Sigmoid colon (tissue), 7 donors: ENCODE measurements at regions of chr11 and their contacts with region 1.

Region 1: GRCh38 chr11:12159351-12160099 is 49.1 kb downstream of the MICAL2 start:
- DNase-seq: peak; percentile 86
- H3K4me3 ChIP-seq: no peak overlapping the region
- H3K27ac ChIP-seq: peak overlapping the region; percentile 83 to 96 (median 94)
- H3K4me1 ChIP-seq: peaks cover 3 to 90% (median 87%) of the 10 kb centered on the region in 4 donors
- H3K27me3 ChIP-seq: no peaks in the 10 kb centered on the region
- CTCF ChIP-seq: no peak
- EP300 ChIP-seq: no peak
- POLR2A ChIP-seq: no peak

Region 2: DNA sequence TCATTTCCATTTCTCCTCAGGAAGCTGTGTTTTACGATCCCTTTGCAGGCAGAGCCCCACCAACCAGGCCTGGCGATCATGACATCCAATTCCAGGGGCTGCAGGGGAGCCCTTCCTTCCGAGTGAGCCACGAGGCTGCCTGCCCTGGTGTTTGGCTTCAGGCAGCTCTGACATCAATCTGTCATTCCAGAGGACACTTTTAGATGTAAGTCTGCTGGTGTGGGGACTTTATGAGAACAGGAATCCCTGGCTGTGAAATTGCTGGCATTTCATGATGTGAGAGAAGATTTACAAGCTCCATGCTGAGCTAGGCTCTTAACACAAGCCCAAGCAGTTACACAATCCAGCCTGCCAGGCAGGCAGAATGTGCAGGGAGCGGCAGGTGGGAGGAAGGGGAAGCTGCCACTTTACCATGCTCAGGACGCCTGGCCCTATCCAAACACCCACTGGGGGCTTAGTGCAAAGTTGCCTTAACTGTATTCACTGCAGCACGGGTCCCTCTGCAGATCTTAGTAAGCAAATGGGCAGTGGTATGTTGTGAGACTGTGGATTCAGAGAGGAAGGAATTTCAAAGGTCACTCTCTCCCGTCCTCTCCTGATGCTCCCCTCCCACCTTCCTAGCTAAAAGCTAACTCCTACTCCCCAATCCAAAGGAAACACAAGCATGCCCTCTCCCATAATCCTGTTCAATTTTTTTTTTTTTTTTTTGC is 92.6 kb before region 1 on chr11:
- intact Hi-C with region 1: loop called (anchors 5 kb)
- DNase-seq: peak; percentile 87
- H3K4me3 ChIP-seq: no peak overlapping the region
- H3K27ac ChIP-seq: peak overlapping the region; percentile 71 to 85 (median 78)
- H3K4me1 ChIP-seq: peaks cover 0 to 30% (median 22%) of the 10 kb centered on the region in 4 donors
- H3K27me3 ChIP-seq: no peaks in the 10 kb centered on the region
- CTCF ChIP-seq: no peak
- EP300 ChIP-seq: peak; percentile 42 to 93 (median 72)
- POLR2A ChIP-seq: no peak

Region 3: DNA sequence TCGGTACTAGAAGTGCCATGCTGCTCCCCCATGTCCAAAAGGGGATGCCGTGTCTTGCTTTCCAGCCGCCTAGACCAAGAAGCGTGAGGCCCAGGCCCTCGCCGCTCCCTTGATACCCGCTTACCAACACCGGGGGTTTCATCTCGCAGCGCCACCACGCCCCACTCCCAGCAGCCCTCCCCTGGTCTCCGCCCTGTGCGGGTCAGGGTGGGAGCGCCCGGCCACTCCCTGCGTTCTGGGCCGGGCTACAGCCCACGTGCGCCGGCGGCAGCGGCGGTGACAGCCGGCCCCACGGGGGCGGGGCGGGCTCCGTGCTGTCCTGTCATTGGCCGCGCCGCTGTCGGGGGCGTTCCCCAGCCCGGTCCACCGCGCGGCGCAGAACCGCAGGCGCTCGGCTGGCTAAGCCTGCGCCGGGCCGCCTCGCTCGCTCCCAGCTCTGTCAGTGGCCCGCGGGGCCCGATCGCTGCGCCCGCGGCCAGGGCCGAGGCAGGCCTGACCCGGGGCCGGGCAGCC is 49.3 kb before region 1 on chr11 and contains the start of gene MICAL2:
- intact Hi-C with region 1: loop called (anchors 5 kb)
- DNase-seq: peak; percentile 94
- H3K4me3 ChIP-seq: peak within 1 kb of the TSS; percentile 71 to 99 (median 77)
- H3K27ac ChIP-seq: peak within 1 kb of the TSS; percentile 92 to 98 (median 95)
- H3K4me1 ChIP-seq: peaks cover 0 to 45% (median 38%) of the 10 kb centered on the region in 4 donors
- H3K27me3 ChIP-seq: no peaks in the 10 kb centered on the region
- CTCF ChIP-seq: no peak
- EP300 ChIP-seq: peak in 1 of 4 donors; percentile 5
- POLR2A ChIP-seq: peak in 1 of 2 donors; percentile 29
- total RNA-seq, gene MICAL2: 115 to 145 (median 130) TPM

Region 4: GRCh38 chr11:12141283-12141682 is 18.2 kb before region 1 on chr11:
- intact Hi-C with region 1: loop called (anchors 2 kb)
- DNase-seq: no peak
- H3K4me3 ChIP-seq: no peak overlapping the region
- H3K27ac ChIP-seq: peak overlapping the region; percentile 79 to 92 (median 88)
- H3K4me1 ChIP-seq: peaks cover 0 to 89% (median 87%) of the 10 kb centered on the region in 4 donors
- H3K27me3 ChIP-seq: no peaks in the 10 kb centered on the region
- CTCF ChIP-seq: no peak
- EP300 ChIP-seq: no peak
- POLR2A ChIP-seq: no peak

Region 5: GRCh38 chr11:12235947-12236743 is 76.6 kb after region 1 on chr11:
- intact Hi-C with region 1: loop called (anchors 2 kb)
- DNase-seq: no peak
- H3K4me3 ChIP-seq: no peak overlapping the region
- H3K27ac ChIP-seq: peak overlapping the region; percentile 77 to 89 (median 86)
- H3K4me1 ChIP-seq: peaks cover 0 to 83% (median 76%) of the 10 kb centered on the region in 4 donors
- H3K27me3 ChIP-seq: no peaks in the 10 kb centered on the region
- CTCF ChIP-seq: peak; percentile 32 to 64 (median 56)
- EP300 ChIP-seq: no peak
- POLR2A ChIP-seq: no peak